ENCODE measurements at regions of chr9 and their contacts with region 1.

Region 1: DNA sequence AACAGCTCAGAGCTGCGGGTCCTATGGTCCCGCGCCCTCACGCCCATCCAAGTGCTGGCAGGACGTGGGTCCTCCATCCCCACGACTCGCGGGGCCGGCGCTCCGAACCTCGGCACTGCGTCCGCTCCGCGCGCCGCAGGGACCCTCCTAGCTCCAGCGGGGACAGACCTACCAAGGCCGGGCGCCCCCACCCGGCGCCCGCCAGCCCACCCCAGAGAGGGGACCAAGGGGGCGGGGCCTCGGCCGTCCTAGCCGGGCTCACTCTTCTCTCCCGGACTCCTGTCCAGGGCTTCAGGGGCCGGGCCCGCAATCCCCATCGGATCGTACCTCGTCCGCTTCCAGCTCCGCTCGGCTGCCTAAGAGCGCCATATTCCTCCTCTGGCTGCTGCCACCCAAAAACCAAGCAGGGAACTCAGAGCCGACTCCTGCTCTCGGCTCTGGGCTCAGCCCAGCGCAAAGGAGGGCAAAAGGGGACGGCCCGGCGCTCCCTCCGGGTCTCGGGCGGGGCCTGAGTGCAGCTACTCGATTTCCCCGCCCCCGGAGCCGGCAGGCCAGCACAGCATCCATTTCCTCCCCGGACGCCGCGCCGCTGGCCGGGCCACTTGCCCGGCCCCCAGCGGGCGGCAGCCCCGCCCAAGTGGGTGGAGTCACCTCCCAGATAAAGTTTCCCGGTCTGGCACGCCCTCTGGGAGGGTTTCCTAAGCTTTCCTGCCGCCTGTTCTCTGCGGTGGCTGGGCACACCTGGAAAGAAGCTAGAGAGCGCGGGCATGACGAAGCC is at the start of gene TTC39B:
- DNase-seq: peak; percentile 70
- ATAC-seq: peak; percentile 85
- H3K4me3 Mint-ChIP-seq: peak within 1 kb of the TSS; percentile 97
- H3K27ac Mint-ChIP-seq: peak within 1 kb of the TSS; percentile 85
- H3K4me1 Mint-ChIP-seq: peaks cover 29% of the 10 kb centered on the region
- H3K27me3 Mint-ChIP-seq: no peaks in the 10 kb centered on the region
- CTCF ChIP-seq: no peak
- total RNA-seq, gene TTC39B: 3.2 and 6.6 TPM in 2 replicates

Region 2: DNA sequence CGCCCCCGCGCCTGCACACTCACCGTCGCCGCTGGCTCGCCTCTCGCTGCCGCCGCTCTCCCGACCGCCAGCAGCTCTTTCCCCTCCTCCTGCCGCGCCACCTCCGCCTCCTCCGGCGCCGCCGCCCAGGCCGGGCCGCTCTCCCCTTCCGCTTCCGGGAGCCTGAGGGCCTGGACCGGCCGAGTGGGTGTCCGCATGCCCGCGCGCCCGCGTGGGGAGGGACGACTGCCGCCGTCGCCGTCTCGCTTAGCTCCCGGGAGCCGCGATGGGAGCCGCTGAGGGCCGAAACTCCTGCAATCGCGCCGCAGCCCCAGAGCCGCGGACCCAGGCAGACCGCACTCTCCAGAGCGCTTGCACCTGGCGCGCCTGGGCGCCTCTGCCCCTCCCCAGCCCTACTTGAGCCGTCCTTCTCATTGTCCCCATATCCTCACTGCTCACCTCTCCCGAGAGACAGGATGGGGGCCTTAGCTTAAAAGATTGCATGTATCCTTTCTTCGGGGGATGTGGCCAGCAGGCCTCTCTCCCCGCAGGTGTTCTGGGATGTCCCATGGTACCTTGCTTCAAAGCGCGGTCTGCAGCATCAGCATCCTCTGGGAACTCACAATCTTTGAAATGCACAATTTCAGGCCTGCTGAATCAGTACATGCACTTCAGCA is 613.6 kb before region 1 on chr9 and contains the start of gene ZDHHC21:
- CTCF ChIA-PET with region 1: no interaction called
- POLR2A ChIA-PET with region 1: no interaction called
- intact Hi-C with region 1: loop called (anchors 10 kb)
- DNase-seq: peak; percentile 60
- ATAC-seq: peak; percentile 75
- H3K4me3 Mint-ChIP-seq: peak within 1 kb of the TSS; percentile 94
- H3K27ac Mint-ChIP-seq: peak within 1 kb of the TSS; percentile 93
- H3K4me1 Mint-ChIP-seq: peaks cover 51% of the 10 kb centered on the region
- H3K27me3 Mint-ChIP-seq: no peaks in the 10 kb centered on the region
- CTCF ChIP-seq: no peak
- total RNA-seq, gene ZDHHC21: 22.6 and 29.4 TPM in 2 replicates

Region 3: GRCh38 chr9:15277400-15278090 is 29.4 kb before region 1 on chr9:
- CTCF ChIA-PET with region 1: interaction called, 6 read pairs
- POLR2A ChIA-PET with region 1: no interaction called
- intact Hi-C with region 1: loop called (anchors 2 kb)
- DNase-seq: no peak
- ATAC-seq: peak; percentile 60
- H3K4me3 Mint-ChIP-seq: no peak overlapping the region
- H3K27ac Mint-ChIP-seq: no peak overlapping the region
- H3K4me1 Mint-ChIP-seq: peaks cover 4% of the 10 kb centered on the region
- H3K27me3 Mint-ChIP-seq: no peaks in the 10 kb centered on the region
- CTCF ChIP-seq: no peak

Region 4: DNA sequence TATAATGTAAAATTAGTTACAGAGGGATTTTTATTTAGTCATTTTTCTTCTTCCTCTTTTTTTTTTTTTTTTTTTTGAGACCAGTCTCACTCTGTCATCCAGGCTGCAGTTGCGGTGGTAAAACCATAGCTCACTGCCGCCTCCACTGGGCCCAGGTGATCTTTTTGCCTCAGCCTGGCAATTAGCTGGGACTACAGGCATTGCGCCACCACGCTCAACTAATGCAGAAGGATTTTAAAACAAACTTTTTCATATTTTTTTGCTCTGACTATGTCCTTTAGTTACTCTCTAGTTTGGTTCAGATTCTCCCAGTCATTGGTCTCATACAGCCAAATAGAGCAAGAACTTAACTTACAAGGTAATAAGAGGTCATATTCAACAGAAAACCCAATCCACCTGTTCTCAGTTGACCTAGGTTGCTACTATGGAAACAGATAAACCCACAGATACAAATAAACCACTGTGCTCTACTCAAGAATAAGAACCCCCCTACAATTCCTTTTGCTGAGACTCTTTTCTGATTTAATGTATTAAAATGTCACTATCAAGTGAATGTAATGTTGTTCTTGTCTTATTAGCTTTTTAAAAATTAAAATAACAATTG is 50.2 kb after region 1 on chr9:
- CTCF ChIA-PET with region 1: no interaction called
- POLR2A ChIA-PET with region 1: interaction called, 11 read pairs
- intact Hi-C with region 1: no loop called
- DNase-seq: no peak
- ATAC-seq: peak; percentile 87
- H3K4me3 Mint-ChIP-seq: no peak overlapping the region
- H3K27ac Mint-ChIP-seq: no peak overlapping the region
- H3K4me1 Mint-ChIP-seq: peaks cover 6% of the 10 kb centered on the region
- H3K27me3 Mint-ChIP-seq: no peaks in the 10 kb centered on the region
- CTCF ChIP-seq: no peak

Region 5: DNA sequence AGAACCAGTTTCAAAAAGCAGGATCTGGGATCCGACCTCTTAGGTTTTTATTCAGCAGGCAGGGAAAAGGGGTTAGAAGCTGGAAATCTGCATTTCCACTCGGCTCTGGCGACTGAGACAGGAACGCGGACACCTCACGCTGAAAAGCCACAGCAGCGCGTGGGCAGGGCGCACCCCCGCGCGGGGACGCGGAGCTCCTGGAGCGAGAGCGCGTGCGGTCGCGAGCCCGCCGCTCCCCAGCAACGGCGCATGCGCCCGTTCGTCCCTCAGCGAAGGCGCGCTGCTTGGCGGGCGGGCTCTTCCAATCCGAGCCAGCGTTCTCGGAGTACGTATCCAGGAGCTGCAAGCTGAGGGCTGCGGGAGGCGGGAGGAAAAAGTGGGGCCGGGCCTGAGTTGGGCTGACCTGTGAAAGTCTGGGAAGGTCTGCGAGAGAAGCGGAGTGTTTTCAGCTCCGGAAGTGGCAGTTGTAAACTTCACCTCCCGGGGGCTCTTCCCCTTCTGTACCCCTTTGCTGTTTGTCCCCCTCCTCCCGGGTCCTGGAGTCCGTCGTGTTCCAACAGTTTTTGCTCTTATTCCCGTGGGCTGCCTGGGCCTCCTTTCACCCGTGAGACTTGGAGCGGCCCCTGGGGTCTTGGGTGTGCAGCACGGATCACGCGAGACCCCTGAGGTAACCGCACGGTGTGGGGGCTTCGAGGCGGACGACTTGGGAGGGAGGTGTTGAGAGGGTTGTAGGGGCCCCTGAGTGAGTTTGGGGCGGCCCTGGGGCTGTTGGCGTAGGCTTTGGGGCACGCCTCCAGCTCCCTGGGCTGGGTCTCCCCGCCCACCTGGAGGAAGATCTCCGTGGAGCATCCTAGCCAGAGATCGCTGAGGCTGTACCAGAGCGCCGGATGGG is 245.9 kb after region 1 on chr9 and contains the start of gene CCDC171:
- CTCF ChIA-PET with region 1: interaction called, 3 read pairs
- POLR2A ChIA-PET with region 1: interaction called, 4 read pairs
- intact Hi-C with region 1: loop called (anchors 5 kb)
- DNase-seq: peak; percentile 76
- ATAC-seq: peak; percentile 85
- H3K4me3 Mint-ChIP-seq: peak within 1 kb of the TSS; percentile 96
- H3K27ac Mint-ChIP-seq: peak within 1 kb of the TSS; percentile 82
- H3K4me1 Mint-ChIP-seq: peaks cover 19% of the 10 kb centered on the region
- H3K27me3 Mint-ChIP-seq: no peaks in the 10 kb centered on the region
- CTCF ChIP-seq: no peak
- total RNA-seq, gene CCDC171: 1.9 and 3.6 TPM in 2 replicates